ENCODE measurements at regions of chr19 and their contacts with region 1.

Region 1: DNA sequence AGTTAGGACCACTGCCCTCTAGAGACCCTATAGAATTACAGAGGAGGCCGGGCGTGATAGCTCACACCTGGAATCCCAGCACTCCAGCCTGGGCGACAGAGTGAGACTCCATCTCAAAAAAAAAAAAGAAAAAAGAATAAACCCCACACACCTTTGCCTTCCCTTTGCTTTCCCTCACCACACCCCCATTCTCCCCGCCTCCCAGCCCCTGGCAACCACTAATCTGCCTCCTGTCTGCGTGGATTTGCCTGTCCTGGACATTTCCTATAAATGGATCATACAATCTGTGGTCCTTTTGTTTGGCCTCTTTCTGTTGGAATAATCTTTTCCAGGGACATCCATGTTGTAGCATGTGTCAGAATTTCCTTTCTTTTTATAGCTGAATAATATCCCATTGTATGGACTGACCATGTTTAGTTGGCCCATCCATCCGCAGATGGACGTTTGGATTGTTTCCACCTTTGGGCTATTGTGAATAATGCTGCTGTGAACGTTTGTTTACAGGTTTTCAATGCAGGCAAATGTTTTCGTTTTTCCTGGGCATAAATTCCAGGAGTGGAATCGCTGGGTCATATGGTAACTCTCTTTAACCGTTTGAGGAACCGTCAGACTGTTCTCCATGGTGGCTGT is 15.3 kb downstream of the NACC1 start:
- DNase-seq: no peak
- ATAC-seq: no peak
- H3K4me3 ChIP-seq: no peak overlapping the region
- H3K27ac ChIP-seq: no peak overlapping the region
- H3K4me1 ChIP-seq: no peaks in the 10 kb centered on the region
- H3K27me3 ChIP-seq: no peaks in the 10 kb centered on the region
- CTCF ChIP-seq: no peak

Region 2: GRCh38 chr19:13093407-13094105 is 39.8 kb before region 1 on chr19:
- CTCF ChIA-PET with region 1: no interaction called
- POLR2A ChIA-PET with region 1: no interaction called
- in situ Hi-C with region 1: no loop called
- intact Hi-C with region 1: no loop called
- DNase-seq: no peak
- ATAC-seq: peak; percentile 83
- H3K4me3 ChIP-seq: no peak overlapping the region
- H3K27ac ChIP-seq: peak overlapping the region; percentile 66
- H3K4me1 ChIP-seq: peaks cover 53% of the 10 kb centered on the region
- H3K27me3 ChIP-seq: no peaks in the 10 kb centered on the region
- CTCF ChIP-seq: peak; percentile 89

Region 3: GRCh38 chr19:13109361-13110098 is 23.8 kb before region 1 on chr19:
- CTCF ChIA-PET with region 1: no interaction called
- POLR2A ChIA-PET with region 1: interaction called, 12 read pairs
- in situ Hi-C with region 1: no loop called
- intact Hi-C with region 1: no loop called
- DNase-seq: no peak
- ATAC-seq: no peak
- H3K4me3 ChIP-seq: no peak overlapping the region
- H3K27ac ChIP-seq: no peak overlapping the region
- H3K4me1 ChIP-seq: no peaks in the 10 kb centered on the region
- H3K27me3 ChIP-seq: no peaks in the 10 kb centered on the region
- CTCF ChIP-seq: no peak

Measured in Panc1 (cell line).